Pancreas (tissue), 10 donors: ENCODE measurements at regions of chr17 and their contacts with region 1.

Region 1: GRCh38 chr17:43316522-43317142 is 82.2 kb upstream of the ARL4D start:
- DNase-seq: peak in 5 of 6 donors; percentile 26 to 54 (median 41)
- ATAC-seq: peak; percentile 38 to 54 (median 48)
- H3K4me3 ChIP-seq: no peak overlapping the region
- H3K27ac ChIP-seq: no peak overlapping the region
- H3K4me1 ChIP-seq: peaks cover 0 to 3% (median 0%) of the 10 kb centered on the region in 3 donors
- H3K27me3 ChIP-seq: no peaks in the 10 kb centered on the region
- CTCF ChIP-seq: no peak

Region 2: GRCh38 chr17:42980398-42981397 is 335.9 kb before region 1 on chr17 and contains the start of gene RUNDC1:
- intact Hi-C with region 1: no loop called
- DNase-seq: peak; percentile 90 to 97 (median 94)
- ATAC-seq: peak; percentile 94 to 96 (median 94)
- H3K4me3 ChIP-seq: peak within 1 kb of the TSS; percentile 68 to 90 (median 86)
- H3K27ac ChIP-seq: peak within 1 kb of the TSS; percentile 68 to 85 (median 76)
- H3K4me1 ChIP-seq: peaks cover 0 to 20% (median 16%) of the 10 kb centered on the region in 3 donors
- H3K27me3 ChIP-seq: no peaks in the 10 kb centered on the region
- CTCF ChIP-seq: peak in 1 of 4 donors; percentile 15
- total RNA-seq, gene RUNDC1: 6.3 to 12.1 (median 7.9) TPM

Region 3: GRCh38 chr17:43224146-43224695 is 92.4 kb before region 1 on chr17:
- intact Hi-C with region 1: loop called in 1 of 3 experiments (anchors 5 kb)
- DNase-seq: peak in 1 of 6 donors; percentile 2
- ATAC-seq: no peak
- H3K4me3 ChIP-seq: no peak overlapping the region
- H3K27ac ChIP-seq: no peak overlapping the region
- H3K4me1 ChIP-seq: no peaks in the 10 kb centered on the region
- H3K27me3 ChIP-seq: no peaks in the 10 kb centered on the region
- CTCF ChIP-seq: no peak

Region 4: GRCh38 chr17:43406676-43407645 is 90.3 kb after region 1 on chr17:
- intact Hi-C with region 1: no loop called
- DNase-seq: no peak
- ATAC-seq: no peak
- H3K4me3 ChIP-seq: no peak overlapping the region
- H3K27ac ChIP-seq: no peak overlapping the region
- H3K4me1 ChIP-seq: no peaks in the 10 kb centered on the region
- H3K27me3 ChIP-seq: no peaks in the 10 kb centered on the region
- CTCF ChIP-seq: no peak